ENCODE measurements at regions of chr18 and their contacts with region 1.

Region 1: DNA sequence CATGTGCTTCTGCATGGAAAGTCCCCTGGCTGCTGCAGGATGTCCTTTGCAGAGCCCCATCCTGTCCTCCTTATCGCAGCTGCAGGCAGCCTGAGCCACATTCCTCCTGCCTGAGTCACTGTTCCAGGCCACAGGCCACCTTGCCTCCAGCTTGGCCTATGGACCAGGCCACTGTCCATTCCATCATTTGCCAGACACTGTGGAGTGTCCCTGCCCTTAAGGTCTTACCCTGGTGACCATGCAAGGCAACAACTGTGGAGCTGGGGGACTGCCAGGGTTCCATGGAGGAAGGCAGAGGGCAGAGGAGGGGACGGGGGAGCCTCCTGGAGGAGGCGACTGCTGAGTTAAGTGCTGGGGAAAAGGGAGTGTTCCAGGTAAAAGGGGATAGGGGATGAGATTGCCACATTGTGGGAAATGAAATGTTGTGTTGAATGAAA is 38.7 kb downstream of the INO80C start:
- DNase-seq: peak; percentile 98
- H3K4me3 ChIP-seq: no peak overlapping the region
- H3K27ac ChIP-seq: peak overlapping the region; percentile 90
- H3K4me1 ChIP-seq: peaks cover 87% of the 10 kb centered on the region
- H3K27me3 ChIP-seq: no peaks in the 10 kb centered on the region
- CTCF ChIP-seq: no peak
- POLR2A ChIP-seq: peak; percentile 86

Region 2: DNA sequence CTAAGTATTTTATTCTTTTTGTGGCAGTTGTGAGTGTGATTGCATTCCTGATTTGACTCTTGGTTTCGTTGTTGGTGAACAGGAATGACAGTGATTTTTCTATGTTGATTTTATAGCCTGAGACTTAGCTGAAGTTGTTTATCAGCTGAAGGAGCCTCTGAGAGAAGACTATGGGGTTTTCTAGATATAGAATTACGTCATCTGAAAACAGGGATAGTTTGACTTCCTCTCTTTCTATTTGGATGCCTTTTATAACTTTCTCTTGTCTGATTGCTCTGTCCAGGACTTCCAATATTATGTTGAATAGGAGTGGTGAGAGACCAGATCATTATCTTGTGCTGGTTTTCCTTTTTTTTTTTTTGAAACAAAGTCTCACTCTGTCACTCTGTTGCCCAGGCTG is 1216.3 kb before region 1 on chr18:
- CTCF ChIA-PET with region 1: no interaction called
- POLR2A ChIA-PET with region 1: no interaction called
- dilution Hi-C with region 1: no loop called
- intact Hi-C with region 1: no loop called
- DNase-seq: no peak
- H3K4me3 ChIP-seq: no peak overlapping the region
- H3K27ac ChIP-seq: no peak overlapping the region
- H3K4me1 ChIP-seq: no peaks in the 10 kb centered on the region
- H3K27me3 ChIP-seq: no peaks in the 10 kb centered on the region
- CTCF ChIP-seq: no peak
- POLR2A ChIP-seq: no peak

Region 3: GRCh38 chr18:35189510-35189909 is 269.5 kb before region 1 on chr18:
- CTCF ChIA-PET with region 1: no interaction called
- POLR2A ChIA-PET with region 1: no interaction called
- dilution Hi-C with region 1: no loop called
- intact Hi-C with region 1: no loop called
- DNase-seq: no peak
- H3K4me3 ChIP-seq: no peak overlapping the region
- H3K27ac ChIP-seq: no peak overlapping the region
- H3K4me1 ChIP-seq: no peaks in the 10 kb centered on the region
- H3K27me3 ChIP-seq: peaks cover 0 to 4% of the 10 kb centered on the region in 2 experiments
- CTCF ChIP-seq: no peak
- POLR2A ChIP-seq: no peak

Region 4: GRCh38 chr18:35430721-35431373 is 28.2 kb before region 1 on chr18:
- CTCF ChIA-PET with region 1: interaction called, 3 read pairs
- POLR2A ChIA-PET with region 1: no interaction called
- dilution Hi-C with region 1: no loop called
- intact Hi-C with region 1: loop called (anchors 1 kb)
- DNase-seq: peak; percentile 91
- H3K4me3 ChIP-seq: no peak overlapping the region
- H3K27ac ChIP-seq: peak overlapping the region; percentile 63
- H3K4me1 ChIP-seq: peaks cover 32% of the 10 kb centered on the region
- H3K27me3 ChIP-seq: no peaks in the 10 kb centered on the region
- CTCF ChIP-seq: no peak
- POLR2A ChIP-seq: peak; percentile 44

Region 5: DNA sequence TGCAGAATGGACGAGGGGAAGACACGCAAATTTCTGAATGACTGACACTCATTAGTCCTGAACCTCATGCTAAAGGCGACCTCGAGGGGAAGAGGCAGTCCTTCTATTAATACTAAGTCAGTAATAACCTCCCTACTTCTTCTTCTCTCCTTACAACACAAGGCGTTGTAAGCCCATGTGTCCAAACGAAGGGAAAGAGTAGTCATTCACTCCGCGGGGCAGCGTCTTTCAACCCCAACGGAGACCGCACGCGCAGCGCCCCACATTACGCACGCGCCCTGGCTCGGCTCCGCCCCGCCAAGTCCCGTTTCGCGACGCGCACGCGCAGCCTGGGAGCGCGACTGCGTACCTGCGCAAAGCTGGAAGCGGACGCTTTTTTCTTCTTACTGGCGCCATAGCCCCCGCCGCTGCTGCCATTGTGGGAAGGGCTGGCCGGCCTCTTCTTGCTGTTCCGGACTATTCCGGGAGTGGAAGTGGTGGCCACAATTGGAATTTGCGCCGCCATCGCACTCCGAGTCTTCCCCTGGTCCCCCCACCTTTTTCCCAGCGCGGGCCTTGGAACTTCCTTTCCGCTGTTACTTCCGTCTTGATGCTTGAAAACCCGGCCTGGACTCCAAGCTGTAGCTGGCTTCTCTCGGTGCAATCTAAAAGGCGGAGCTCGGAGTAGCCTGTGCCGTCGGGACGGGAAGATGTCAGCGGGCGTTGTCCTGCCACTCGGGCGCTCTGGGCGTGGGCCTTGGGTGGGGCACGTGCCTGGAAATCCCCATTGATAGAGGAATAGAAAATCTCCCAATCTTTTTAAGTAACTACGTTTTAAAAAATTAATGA is 38.6 kb after region 1 on chr18 and contains the start of gene INO80C:
- CTCF ChIA-PET with region 1: interaction called, 6 read pairs
- POLR2A ChIA-PET with region 1: no interaction called
- dilution Hi-C with region 1: no loop called
- intact Hi-C with region 1: loop called (anchors 1 kb)
- DNase-seq: peak; percentile 96
- H3K4me3 ChIP-seq: peak within 1 kb of the TSS; percentile 60 to 89 (median 73)
- H3K27ac ChIP-seq: peak within 1 kb of the TSS; percentile 93
- H3K4me1 ChIP-seq: peaks cover 23% of the 10 kb centered on the region
- H3K27me3 ChIP-seq: no peaks in the 10 kb centered on the region
- CTCF ChIP-seq: no peak
- POLR2A ChIP-seq: peak; percentile 88
- total RNA-seq, gene INO80C: 51.4 and 56.0 TPM in 2 replicates

Region 6: DNA sequence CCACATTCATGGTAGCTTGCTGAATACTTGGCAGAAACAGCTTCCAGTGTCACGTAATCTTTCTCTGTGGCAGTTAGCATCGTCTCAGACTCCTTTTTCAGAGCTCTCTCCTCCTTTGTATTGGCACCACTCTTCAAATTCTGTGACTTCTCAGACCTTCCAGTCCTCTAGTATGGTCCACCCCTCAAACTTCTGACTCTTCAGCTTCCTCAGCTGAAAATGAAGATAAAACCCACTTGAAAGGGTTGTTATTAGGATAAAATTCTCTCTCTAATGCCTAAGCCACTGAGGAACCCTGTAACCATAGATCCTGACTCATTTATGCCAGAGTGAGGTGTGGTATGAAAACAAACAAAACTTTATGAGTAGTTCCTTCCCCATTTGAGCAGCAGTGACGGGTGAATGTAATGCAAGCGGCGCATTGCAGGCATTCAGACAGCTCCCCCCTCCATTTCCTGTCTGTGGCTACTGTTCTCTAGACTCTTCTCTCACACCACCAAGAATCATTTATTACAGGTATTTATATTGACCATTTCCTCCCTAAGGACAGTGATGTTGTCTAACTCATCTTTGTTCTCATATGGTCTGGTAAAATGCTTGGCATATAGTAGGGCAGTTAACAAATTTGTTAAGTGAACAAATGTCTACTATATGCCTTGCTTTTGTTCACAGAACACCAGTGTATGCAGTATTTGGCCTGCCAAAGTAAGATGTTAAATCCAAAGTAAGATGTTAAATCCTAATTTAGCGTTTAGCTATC is 157.8 kb after region 1 on chr18:
- CTCF ChIA-PET with region 1: interaction called, 3 read pairs
- POLR2A ChIA-PET with region 1: no interaction called
- dilution Hi-C with region 1: no loop called
- intact Hi-C with region 1: loop called (anchors 1 kb)
- DNase-seq: peak; percentile 95
- H3K4me3 ChIP-seq: peak overlapping the region in 1 of 3 experiments; percentile 54
- H3K27ac ChIP-seq: peak overlapping the region; percentile 98
- H3K4me1 ChIP-seq: peaks cover 83% of the 10 kb centered on the region
- H3K27me3 ChIP-seq: no peaks in the 10 kb centered on the region
- CTCF ChIP-seq: no peak
- POLR2A ChIP-seq: peak; percentile 52

Measured in endothelial cell of umbilical vein (primary cell).